ENCODE measurements at regions of chr7 and their contacts with region 1.

Region 1: DNA sequence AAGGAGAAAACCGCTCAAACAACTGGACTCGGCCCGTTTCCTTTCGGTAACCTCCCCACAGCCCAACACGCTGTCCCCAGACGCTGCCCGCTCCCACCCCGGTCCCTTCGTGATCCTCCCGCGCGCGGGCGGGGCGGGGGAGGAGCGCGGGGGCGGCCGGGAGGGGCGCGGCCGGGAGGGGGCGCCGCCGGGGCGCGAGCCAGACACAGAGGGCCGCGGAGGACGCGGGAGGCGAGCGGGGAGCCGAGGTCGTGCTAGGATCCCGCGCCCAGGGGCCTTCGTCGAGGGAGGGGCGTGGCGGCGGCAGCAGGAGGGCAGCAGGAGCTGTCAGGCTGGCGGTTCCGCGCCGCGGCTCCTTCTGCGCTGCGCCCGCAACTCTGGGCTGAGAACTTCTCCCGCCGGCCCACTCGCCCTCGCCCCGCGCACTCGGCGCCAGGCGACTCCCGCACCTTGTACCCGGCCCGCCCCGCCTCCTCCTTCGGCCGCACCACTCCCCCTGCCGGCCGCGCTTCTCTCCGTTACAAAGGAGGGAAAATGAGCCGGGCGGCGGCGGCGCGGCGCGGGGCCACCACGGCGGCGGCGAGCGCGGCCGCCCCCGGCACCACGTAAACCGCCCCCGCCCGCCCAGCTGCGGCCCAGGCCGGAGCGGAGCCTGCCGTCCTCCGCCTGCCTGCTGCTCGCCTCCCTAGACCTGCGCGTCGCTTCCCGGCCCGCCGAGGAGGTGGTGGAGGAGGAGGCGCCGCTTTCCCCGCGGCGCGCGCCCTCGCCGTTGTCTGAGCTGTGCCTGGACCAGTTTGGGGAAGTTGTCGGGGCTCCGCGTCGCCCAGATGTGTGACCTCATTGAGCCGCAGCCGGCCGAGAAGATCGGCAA is at the start of gene CDK14:
- DNase-seq: no peak
- ATAC-seq: peak; percentile 58
- H3K4me3 ChIP-seq: peak within 1 kb of the TSS; percentile 92
- H3K27ac ChIP-seq: peak within 1 kb of the TSS; percentile 55
- H3K4me1 ChIP-seq: peaks cover 10% of the 10 kb centered on the region
- H3K27me3 ChIP-seq: no peaks in the 10 kb centered on the region
- CTCF ChIP-seq: peak in 2 of 3 experiments; percentile 29 to 33; a peak in 3 of 6 replicates
- EP300 ChIP-seq: no peak
- POLR2A ChIP-seq: peak; percentile 78
- RAD21 ChIP-seq: peak; percentile 44; the same call in 1 of the 2 replicates
- polyA plus RNA-seq, gene CDK14: 6.5 to 7.3 TPM

Region 2: GRCh38 chr7:90094030-90094429 is 502.0 kb before region 1 on chr7:
- CTCF ChIA-PET with region 1: no interaction called
- POLR2A ChIA-PET with region 1: no interaction called
- RAD21 ChIA-PET with region 1: no interaction called
- SMC1A ChIA-PET with region 1: no interaction called
- in situ Hi-C with region 1: no loop called
- intact Hi-C with region 1: no loop called
- DNase-seq: no peak
- ATAC-seq: no peak
- H3K4me3 ChIP-seq: no peak overlapping the region
- H3K27ac ChIP-seq: no peak overlapping the region
- H3K4me1 ChIP-seq: no peaks in the 10 kb centered on the region
- H3K27me3 ChIP-seq: no peaks in the 10 kb centered on the region
- CTCF ChIP-seq: no peak
- EP300 ChIP-seq: no peak
- POLR2A ChIP-seq: no peak
- RAD21 ChIP-seq: no peak

Region 3: DNA sequence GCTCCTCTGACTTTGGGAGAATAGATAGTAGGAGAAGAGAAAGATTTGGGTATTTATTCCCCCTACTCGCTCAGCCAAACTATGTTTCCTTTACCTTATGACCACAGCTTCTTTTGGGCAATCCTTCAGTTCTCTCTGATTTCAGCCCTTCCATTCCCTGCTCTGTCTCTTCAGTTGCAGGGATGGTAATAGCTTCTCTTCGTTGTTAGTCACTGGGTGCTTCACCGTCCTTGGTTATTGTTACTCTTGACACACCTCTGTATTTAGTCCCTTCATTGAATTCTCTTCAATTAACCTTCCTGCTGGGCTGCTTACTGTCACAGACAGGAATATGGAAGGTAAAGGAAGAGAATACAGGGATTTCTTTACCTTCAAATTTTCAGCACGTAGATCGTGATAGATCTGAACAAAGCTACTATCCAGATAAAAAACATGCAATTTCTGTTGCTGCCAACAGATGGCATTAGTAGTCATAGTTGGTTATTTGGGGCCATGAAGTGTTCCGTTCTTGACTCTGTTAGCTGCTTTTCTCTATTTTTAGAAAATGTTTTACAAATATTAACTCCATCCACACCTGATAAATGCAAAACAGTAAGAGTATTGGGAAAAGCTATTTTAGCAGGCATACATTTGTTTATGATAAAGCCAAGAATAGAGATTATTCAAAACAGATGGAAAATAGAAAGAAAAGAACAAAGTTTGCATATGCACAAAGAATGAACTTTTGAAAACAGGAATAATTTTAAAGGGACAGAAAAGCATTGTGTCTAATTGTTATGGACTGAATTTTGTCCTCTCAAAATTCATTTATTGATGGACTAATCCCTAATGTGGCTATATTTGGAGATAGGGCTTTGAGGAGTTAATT is 140.6 kb before region 1 on chr7:
- CTCF ChIA-PET with region 1: interaction called, 14 read pairs
- POLR2A ChIA-PET with region 1: no interaction called
- RAD21 ChIA-PET with region 1: interaction called, 10 read pairs
- SMC1A ChIA-PET with region 1: interaction called, 3 read pairs
- in situ Hi-C with region 1: no loop called
- intact Hi-C with region 1: no loop called
- DNase-seq: peak; percentile 7
- ATAC-seq: peak; percentile 93
- H3K4me3 ChIP-seq: no peak overlapping the region
- H3K27ac ChIP-seq: no peak overlapping the region
- H3K4me1 ChIP-seq: no peaks in the 10 kb centered on the region
- H3K27me3 ChIP-seq: no peaks in the 10 kb centered on the region
- CTCF ChIP-seq: peak; percentile 61 to 76 (median 63); a peak in 5 of 6 replicates
- EP300 ChIP-seq: no peak
- POLR2A ChIP-seq: no peak
- RAD21 ChIP-seq: peak; percentile 79

Region 4: DNA sequence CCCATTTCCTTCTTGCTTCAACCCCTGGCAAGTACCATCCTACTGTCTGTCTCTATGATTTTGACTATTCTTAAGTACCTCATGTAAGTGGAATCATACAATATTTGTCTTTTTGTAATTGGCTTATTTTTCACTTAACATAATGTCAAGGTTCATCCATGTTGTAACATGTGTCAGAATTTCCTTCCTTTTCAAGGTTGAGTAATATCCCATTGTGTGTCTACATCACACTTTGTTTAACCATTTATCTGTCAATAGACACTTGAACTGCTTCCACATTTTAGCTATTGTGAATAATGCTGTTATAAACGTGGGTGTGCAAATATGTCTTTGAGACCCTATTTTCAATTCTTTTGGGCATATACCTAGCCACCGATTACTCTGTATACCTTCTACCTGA is 13.9 kb before region 1 on chr7:
- CTCF ChIA-PET with region 1: interaction called, 19 read pairs
- POLR2A ChIA-PET with region 1: interaction called, 5 read pairs
- RAD21 ChIA-PET with region 1: no interaction called
- SMC1A ChIA-PET with region 1: no interaction called
- in situ Hi-C with region 1: no loop called
- intact Hi-C with region 1: no loop called
- DNase-seq: no peak
- ATAC-seq: no peak
- H3K4me3 ChIP-seq: no peak overlapping the region
- H3K27ac ChIP-seq: no peak overlapping the region
- H3K4me1 ChIP-seq: no peaks in the 10 kb centered on the region
- H3K27me3 ChIP-seq: no peaks in the 10 kb centered on the region
- CTCF ChIP-seq: no peak
- EP300 ChIP-seq: no peak
- POLR2A ChIP-seq: no peak
- RAD21 ChIP-seq: no peak

Region 5: DNA sequence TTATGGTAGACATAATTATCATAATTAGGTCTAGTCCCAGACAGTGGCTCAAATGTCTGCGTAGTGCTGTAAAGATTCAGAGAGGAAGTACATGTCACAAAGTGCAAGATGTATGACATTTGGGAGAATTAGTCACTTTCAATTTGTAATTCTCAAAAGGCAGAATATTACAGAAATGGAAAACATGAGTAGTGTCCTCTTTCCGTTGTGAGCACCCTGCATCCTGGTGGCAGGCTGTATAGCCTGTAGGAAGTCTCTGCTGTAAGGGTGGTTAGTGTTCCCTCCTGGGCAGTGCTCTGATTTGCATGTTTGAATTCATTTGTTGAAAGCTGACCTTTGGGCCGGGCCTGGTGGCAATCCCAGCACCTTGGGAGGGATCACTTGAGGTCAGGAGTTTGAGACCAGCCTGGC is 17.1 kb after region 1 on chr7:
- CTCF ChIA-PET with region 1: interaction called, 5 read pairs
- POLR2A ChIA-PET with region 1: interaction called, 11 read pairs
- RAD21 ChIA-PET with region 1: interaction called, 9 read pairs
- SMC1A ChIA-PET with region 1: interaction called, 45 read pairs
- in situ Hi-C with region 1: no loop called
- intact Hi-C with region 1: no loop called
- DNase-seq: peak; percentile 69
- ATAC-seq: peak; percentile 93
- H3K4me3 ChIP-seq: peak overlapping the region; percentile 38; the same call in 1 of the 2 replicates
- H3K27ac ChIP-seq: peak overlapping the region; percentile 47
- H3K4me1 ChIP-seq: 0 out of 2 replicates have a peak, but pooled peaks cover 4% of the 10 kb centered on the region
- H3K27me3 ChIP-seq: no peaks in the 10 kb centered on the region
- CTCF ChIP-seq: no peak
- EP300 ChIP-seq: peak in 1 of 2 experiments; percentile 41; a peak in 1 of 4 replicates
- POLR2A ChIP-seq: peak; percentile 28; the same call in 1 of the 2 replicates
- RAD21 ChIP-seq: no peak

Measured in GM12878 (cell line).